Activated CD4-positive, alpha-beta T cell treated with anti-CD3 and anti-CD28 coated beads, Interleukin-2, amount 10 ng/mL, durations not matched to agents 7 days and 5 days (primary cell): ENCODE measurements at regions of chr9 and their contacts with region 1.

Region 1: GRCh38 chr9:92140074-92140753 is 25.0 kb upstream of the SPTLC1 start:
- DNase-seq: peak; percentile 73
- H3K4me3 Mint-ChIP-seq: no peak overlapping the region
- H3K27ac Mint-ChIP-seq: no peak overlapping the region
- H3K4me1 Mint-ChIP-seq: peaks cover 8% of the 10 kb centered on the region
- H3K27me3 Mint-ChIP-seq: peaks cover 29% of the 10 kb centered on the region

Region 2: DNA sequence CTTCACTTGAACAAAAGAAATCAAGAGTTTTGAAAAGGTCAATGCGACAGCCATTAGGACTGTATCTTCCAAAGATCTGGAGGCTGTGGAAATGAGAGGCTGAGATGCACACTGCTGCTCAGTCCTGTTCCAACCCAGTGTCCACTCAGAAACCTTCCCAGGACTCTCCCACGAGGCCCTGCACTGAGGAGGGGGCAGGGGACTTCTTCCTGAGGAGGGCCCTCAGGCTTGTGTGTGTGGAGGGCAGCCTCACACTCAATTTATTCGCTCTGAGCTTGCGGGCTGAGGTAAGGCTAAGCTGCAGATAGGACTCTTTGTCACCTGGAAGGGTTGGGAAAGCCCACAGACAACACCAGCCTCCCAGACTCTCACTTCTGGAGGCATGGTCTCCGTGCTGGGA is 120.6 kb before region 1 on chr9:
- CTCF ChIA-PET with region 1: no interaction called
- POLR2A ChIA-PET with region 1: no interaction called
- DNase-seq: no peak
- H3K4me3 Mint-ChIP-seq: no peak overlapping the region
- H3K27ac Mint-ChIP-seq: no peak overlapping the region
- H3K4me1 Mint-ChIP-seq: no peaks in the 10 kb centered on the region
- H3K27me3 Mint-ChIP-seq: peaks cover 1% of the 10 kb centered on the region

Region 3: DNA sequence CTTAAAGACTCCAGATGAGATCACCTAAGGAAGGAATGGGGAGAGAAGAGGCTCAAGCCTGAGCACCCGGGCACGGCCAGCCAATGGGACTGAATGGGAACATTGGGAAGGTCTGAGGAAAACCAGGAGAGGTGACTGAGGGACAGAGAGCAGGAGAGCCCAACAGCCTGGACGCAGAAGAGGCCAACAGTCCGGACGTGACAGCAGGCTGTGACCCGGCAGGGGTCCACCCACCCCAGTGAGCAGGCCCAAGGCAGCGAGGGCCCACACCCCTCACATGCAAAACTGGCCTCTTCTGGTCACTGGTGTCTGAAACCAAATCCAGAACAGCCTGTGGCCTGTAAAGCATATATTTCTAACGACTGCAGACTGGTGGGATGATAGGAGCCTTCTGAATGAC is 17.4 kb before region 1 on chr9:
- CTCF ChIA-PET with region 1: interaction called, 26 read pairs
- POLR2A ChIA-PET with region 1: no interaction called
- DNase-seq: no peak
- H3K4me3 Mint-ChIP-seq: no peak overlapping the region
- H3K27ac Mint-ChIP-seq: no peak overlapping the region
- H3K4me1 Mint-ChIP-seq: no peaks in the 10 kb centered on the region
- H3K27me3 Mint-ChIP-seq: peaks cover 11% of the 10 kb centered on the region

Region 4: GRCh38 chr9:92634712-92635605 is 494.7 kb after region 1 on chr9:
- CTCF ChIA-PET with region 1: interaction called, 10 read pairs
- POLR2A ChIA-PET with region 1: no interaction called
- DNase-seq: peak; percentile 69
- H3K4me3 Mint-ChIP-seq: no peak overlapping the region
- H3K27ac Mint-ChIP-seq: no peak overlapping the region
- H3K4me1 Mint-ChIP-seq: peaks cover 7% of the 10 kb centered on the region
- H3K27me3 Mint-ChIP-seq: no peaks in the 10 kb centered on the region